ENCODE measurements at regions of chr11 and their contacts with region 1.

Region 1: GRCh38 chr11:19742588-19743292 is 30.1 kb downstream of the NAV2 start:
- DNase-seq: peak; percentile 41 to 75
- H3K4me3 ChIP-seq: no peak overlapping the region
- H3K4me1 ChIP-seq: no peaks in the 10 kb centered on the region
- H3K27me3 ChIP-seq: no peaks in the 10 kb centered on the region

Region 2: GRCh38 chr11:19071255-19071654 is 671.5 kb before region 1 on chr11:
- in situ Hi-C with region 1: loop called (anchors 25 kb)
- DNase-seq: peak; percentile 84 to 89
- H3K4me3 ChIP-seq: no peak overlapping the region
- H3K4me1 ChIP-seq: no peaks in the 10 kb centered on the region
- H3K27me3 ChIP-seq: no peaks in the 10 kb centered on the region

Region 3: DNA sequence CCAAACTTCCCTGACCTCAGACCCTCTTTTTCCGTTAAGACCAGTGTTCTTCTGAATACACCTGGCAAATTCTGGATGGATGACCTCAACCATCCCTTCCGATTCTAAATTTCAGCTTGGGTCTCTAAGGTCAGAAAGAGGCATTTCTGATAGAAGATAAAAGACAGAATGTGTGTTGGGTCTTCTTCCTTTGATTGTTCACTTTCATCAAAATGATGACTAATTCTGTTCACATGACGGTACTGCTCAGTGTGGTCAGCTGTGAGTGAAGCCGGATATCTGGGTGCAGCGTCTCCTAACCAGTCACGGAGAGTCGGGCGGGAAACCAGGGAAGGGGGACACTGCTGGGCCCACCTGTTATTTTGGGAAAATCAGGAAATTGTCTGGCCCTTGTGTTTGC is 181.7 kb before region 1 on chr11:
- in situ Hi-C with region 1: loop called (anchors 5 kb)
- DNase-seq: no peak
- H3K4me3 ChIP-seq: no peak overlapping the region
- H3K4me1 ChIP-seq: no peaks in the 10 kb centered on the region
- H3K27me3 ChIP-seq: peaks cover 23% of the 10 kb centered on the region